ENCODE measurements at regions of chr16 and their contacts with region 1.

Region 1: GRCh38 chr16:6593799-6594198 is 738.8 kb upstream of the RBFOX1 start:
- DNase-seq: no peak
- ATAC-seq: no peak
- H3K4me3 ChIP-seq: no peak overlapping the region
- H3K27ac ChIP-seq: no peak overlapping the region
- H3K4me1 ChIP-seq: no peaks in the 10 kb centered on the region
- H3K27me3 ChIP-seq: peaks cover 2% of the 10 kb centered on the region; the same call in 1 of the 2 replicates
- CTCF ChIP-seq: no peak

Region 2: GRCh38 chr16:5903153-5903552 is 690.6 kb before region 1 on chr16:
- CTCF ChIA-PET with region 1: no interaction called
- POLR2A ChIA-PET with region 1: no interaction called
- in situ Hi-C with region 1: no loop called
- intact Hi-C with region 1: no loop called
- DNase-seq: no peak
- ATAC-seq: no peak
- H3K4me3 ChIP-seq: no peak overlapping the region
- H3K27ac ChIP-seq: no peak overlapping the region
- H3K4me1 ChIP-seq: no peaks in the 10 kb centered on the region
- H3K27me3 ChIP-seq: no peaks in the 10 kb centered on the region
- CTCF ChIP-seq: no peak

Region 3: GRCh38 chr16:6483469-6484033 is 110.2 kb before region 1 on chr16:
- CTCF ChIA-PET with region 1: no interaction called
- POLR2A ChIA-PET with region 1: no interaction called
- in situ Hi-C with region 1: no loop called
- intact Hi-C with region 1: loop called (anchors 5 kb)
- DNase-seq: no peak
- ATAC-seq: no peak
- H3K4me3 ChIP-seq: no peak overlapping the region
- H3K27ac ChIP-seq: no peak overlapping the region
- H3K4me1 ChIP-seq: no peaks in the 10 kb centered on the region
- H3K27me3 ChIP-seq: no peaks in the 10 kb centered on the region; the same call in 1 of the 2 replicates
- CTCF ChIP-seq: no peak

Region 4: GRCh38 chr16:6735631-6736030 is 141.8 kb after region 1 on chr16:
- CTCF ChIA-PET with region 1: no interaction called
- POLR2A ChIA-PET with region 1: no interaction called
- in situ Hi-C with region 1: no loop called
- intact Hi-C with region 1: no loop called
- DNase-seq: no peak
- ATAC-seq: no peak
- H3K4me3 ChIP-seq: no peak overlapping the region
- H3K27ac ChIP-seq: no peak overlapping the region
- H3K4me1 ChIP-seq: no peaks in the 10 kb centered on the region
- H3K27me3 ChIP-seq: no peaks in the 10 kb centered on the region
- CTCF ChIP-seq: no peak

Region 5: GRCh38 chr16:6913566-6913965 is 319.8 kb after region 1 on chr16:
- CTCF ChIA-PET with region 1: no interaction called
- POLR2A ChIA-PET with region 1: no interaction called
- in situ Hi-C with region 1: no loop called
- intact Hi-C with region 1: no loop called
- DNase-seq: no peak
- ATAC-seq: no peak
- H3K4me3 ChIP-seq: no peak overlapping the region
- H3K27ac ChIP-seq: no peak overlapping the region
- H3K4me1 ChIP-seq: no peaks in the 10 kb centered on the region
- H3K27me3 ChIP-seq: no peaks in the 10 kb centered on the region
- CTCF ChIP-seq: no peak

Measured in Panc1 (cell line).